Endothelial cell of umbilical vein (primary cell): ENCODE measurements at regions of chr18 and their contacts with region 1.

Region 1: DNA sequence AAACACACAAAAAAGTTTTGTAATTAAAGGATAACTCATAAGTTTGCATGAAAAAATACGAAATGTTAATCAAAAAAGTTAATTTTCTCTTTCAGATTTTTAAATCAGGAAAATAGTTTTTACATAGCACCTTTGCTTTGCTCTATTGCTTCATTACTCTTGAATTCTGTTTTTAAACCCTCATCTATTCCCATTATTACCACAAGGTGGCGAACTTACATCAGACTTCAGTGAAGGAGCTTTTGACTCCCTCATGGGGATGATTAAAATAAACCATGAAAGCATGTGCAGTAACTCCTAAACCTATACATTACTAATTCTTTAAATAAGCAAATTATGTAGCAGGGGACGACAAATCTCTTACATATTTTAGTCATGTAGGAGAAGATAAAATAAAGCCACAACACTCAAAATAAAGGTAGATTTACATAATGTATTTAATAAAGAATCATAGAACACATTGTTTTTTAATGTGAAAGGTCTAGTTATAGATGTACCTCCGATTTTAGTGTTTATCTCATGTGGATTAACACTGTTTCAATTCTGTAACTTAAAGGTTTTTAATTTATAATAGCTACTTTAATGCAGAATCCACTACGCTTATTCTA is 105.2 kb downstream of the NETO1 start:
- DNase-seq: peak; percentile 36
- H3K4me3 ChIP-seq: no peak overlapping the region
- H3K27ac ChIP-seq: no peak overlapping the region
- H3K4me1 ChIP-seq: no peaks in the 10 kb centered on the region
- H3K27me3 ChIP-seq: no peaks in the 10 kb centered on the region
- CTCF ChIP-seq: peak; percentile 33 to 42
- POLR2A ChIP-seq: no peak

Region 2: DNA sequence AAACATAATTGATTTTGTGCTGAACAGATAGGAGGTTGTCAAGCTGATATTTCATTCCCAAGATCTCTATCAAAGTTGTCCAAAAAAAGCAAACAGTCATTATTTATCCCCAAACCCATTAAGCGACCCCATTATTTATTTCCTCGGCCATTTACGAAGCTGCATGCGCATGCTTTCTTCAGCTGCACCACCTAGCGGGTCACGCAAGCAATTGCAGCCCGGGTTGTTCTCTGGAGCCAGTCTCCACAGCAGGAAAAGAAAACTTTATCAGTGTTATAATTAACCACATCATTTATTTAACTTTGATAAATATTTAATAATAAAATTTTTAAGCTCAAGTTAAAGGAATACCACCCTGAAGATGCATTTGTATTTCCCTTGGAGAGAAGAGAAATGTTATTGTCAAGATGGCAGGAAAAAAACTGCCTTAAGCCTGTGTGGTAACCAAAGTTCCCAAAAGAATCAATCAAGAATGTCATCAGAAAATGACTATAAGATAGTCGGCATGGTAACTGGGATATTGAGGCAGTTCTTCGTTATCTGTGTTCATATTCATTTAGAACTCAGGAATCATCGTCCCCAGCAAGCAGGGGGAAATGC is 1080.3 kb after region 1 on chr18:
- CTCF ChIA-PET with region 1: interaction called, 6 read pairs
- POLR2A ChIA-PET with region 1: no interaction called
- dilution Hi-C with region 1: no loop called
- intact Hi-C with region 1: loop called (anchors 1 kb)
- DNase-seq: no peak
- H3K4me3 ChIP-seq: no peak overlapping the region
- H3K27ac ChIP-seq: no peak overlapping the region
- H3K4me1 ChIP-seq: no peaks in the 10 kb centered on the region
- H3K27me3 ChIP-seq: no peaks in the 10 kb centered on the region
- CTCF ChIP-seq: peak; percentile 61 to 63
- POLR2A ChIP-seq: no peak